Naive thymus-derived CD4-positive, alpha-beta T cell (primary cell): ENCODE measurements at regions of chr3 and their contacts with region 1.

Region 1: GRCh38 chr3:105791919-105792786 is 76.7 kb downstream of the CBLB start:
- DNase-seq: no peak
- ATAC-seq: no peak
- H3K4me3 ChIP-seq: no peak overlapping the region
- H3K4me3 Mint-ChIP-seq: peak overlapping the region in 1 of 10 donors; percentile 25
- H3K27ac ChIP-seq: no peak overlapping the region
- H3K27ac Mint-ChIP-seq: peak overlapping the region in 5 of 9 donors; percentile 22 to 73 (median 47)
- H3K4me1 ChIP-seq: peaks cover 3 to 24% of the 10 kb centered on the region in 2 donors
- H3K4me1 Mint-ChIP-seq: peaks cover 39 to 86% (median 76%) of the 10 kb centered on the region in 7 donors
- H3K27me3 ChIP-seq: no peaks in the 10 kb centered on the region
- H3K27me3 Mint-ChIP-seq: no peaks in the 10 kb centered on the region

Region 2: DNA sequence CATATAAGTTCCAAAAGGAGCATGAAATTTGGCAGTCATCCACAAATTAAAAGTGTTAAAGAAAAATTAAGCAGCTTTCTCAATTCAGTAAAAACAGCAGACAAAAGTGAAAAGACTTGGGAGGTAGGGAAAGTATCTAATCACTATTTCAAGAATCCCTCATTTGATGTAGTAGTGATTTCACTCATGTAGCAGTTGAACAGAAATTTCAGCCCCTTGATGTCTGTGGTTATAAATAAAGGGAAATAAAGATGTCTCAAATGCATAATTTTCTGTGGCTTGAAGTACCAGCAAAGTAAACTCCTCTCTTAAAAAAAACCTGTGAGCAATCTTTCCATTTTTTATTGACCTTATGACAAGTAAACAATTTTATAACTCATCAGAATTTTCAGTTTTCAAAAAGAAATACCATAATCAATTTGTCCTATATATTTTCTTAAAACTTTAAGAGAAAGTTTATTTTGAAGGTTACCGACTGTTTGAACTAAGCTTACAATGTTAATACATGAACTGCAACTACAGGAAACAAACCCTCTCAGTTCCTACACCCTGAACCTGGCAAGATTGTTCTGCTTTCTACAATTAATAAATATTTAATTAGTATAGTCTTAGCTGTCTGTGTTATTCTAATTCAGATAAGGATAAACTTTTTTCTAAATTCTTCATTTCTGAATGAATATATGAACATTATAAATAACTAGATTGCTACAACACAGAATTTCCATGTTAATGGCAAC is 17.5 kb before region 1 on chr3:
- CTCF ChIA-PET with region 1: no interaction called
- POLR2A ChIA-PET with region 1: no interaction called
- intact Hi-C with region 1: loop called in 1 of 2 experiments (anchors 1 kb)
- DNase-seq: no peak
- ATAC-seq: no peak
- H3K4me3 ChIP-seq: no peak overlapping the region
- H3K4me3 Mint-ChIP-seq: peak overlapping the region in 5 of 10 donors; percentile 19 to 51 (median 37)
- H3K27ac ChIP-seq: no peak overlapping the region
- H3K27ac Mint-ChIP-seq: peak overlapping the region in 5 of 9 donors; percentile 6 to 19 (median 13)
- H3K4me1 ChIP-seq: peaks cover 17 to 50% of the 10 kb centered on the region in 2 donors
- H3K4me1 Mint-ChIP-seq: peaks cover 40 to 93% (median 76%) of the 10 kb centered on the region in 7 donors
- H3K27me3 ChIP-seq: no peaks in the 10 kb centered on the region
- H3K27me3 Mint-ChIP-seq: no peaks in the 10 kb centered on the region

Region 3: GRCh38 chr3:105781871-105782270 is 10.3 kb before region 1 on chr3:
- CTCF ChIA-PET with region 1: no interaction called
- POLR2A ChIA-PET with region 1: interaction called, 4 read pairs
- intact Hi-C with region 1: loop called in 1 of 2 experiments (anchors 1 kb)
- DNase-seq: no peak
- ATAC-seq: no peak
- H3K4me3 ChIP-seq: no peak overlapping the region
- H3K4me3 Mint-ChIP-seq: peak overlapping the region in 7 of 10 donors; percentile 1 to 51 (median 34)
- H3K27ac ChIP-seq: no peak overlapping the region
- H3K27ac Mint-ChIP-seq: peak overlapping the region in 8 of 9 donors; percentile 1 to 81 (median 24)
- H3K4me1 ChIP-seq: peaks cover 18% of the 10 kb centered on the region in 2 donors
- H3K4me1 Mint-ChIP-seq: peaks cover 31 to 77% (median 64%) of the 10 kb centered on the region in 7 donors
- H3K27me3 ChIP-seq: no peaks in the 10 kb centered on the region
- H3K27me3 Mint-ChIP-seq: no peaks in the 10 kb centered on the region